GM12878 (cell line): ENCODE measurements at regions of chr3 and their contacts with region 1.

Region 1: GRCh38 chr3:9932843-9933560 is 632 bp upstream of the CRELD1 start:
- DNase-seq: peak; percentile 40
- ATAC-seq: peak; percentile 88
- H3K4me3 ChIP-seq: peak overlapping the region; percentile 89
- H3K27ac ChIP-seq: peak overlapping the region; percentile 71
- H3K4me1 ChIP-seq: peaks cover 9% of the 10 kb centered on the region
- H3K27me3 ChIP-seq: no peaks in the 10 kb centered on the region
- CTCF ChIP-seq: peak; percentile 82 to 93 (median 90)
- EP300 ChIP-seq: no peak
- POLR2A ChIP-seq: peak; percentile 66
- RAD21 ChIP-seq: peak; percentile 61

Region 2: DNA sequence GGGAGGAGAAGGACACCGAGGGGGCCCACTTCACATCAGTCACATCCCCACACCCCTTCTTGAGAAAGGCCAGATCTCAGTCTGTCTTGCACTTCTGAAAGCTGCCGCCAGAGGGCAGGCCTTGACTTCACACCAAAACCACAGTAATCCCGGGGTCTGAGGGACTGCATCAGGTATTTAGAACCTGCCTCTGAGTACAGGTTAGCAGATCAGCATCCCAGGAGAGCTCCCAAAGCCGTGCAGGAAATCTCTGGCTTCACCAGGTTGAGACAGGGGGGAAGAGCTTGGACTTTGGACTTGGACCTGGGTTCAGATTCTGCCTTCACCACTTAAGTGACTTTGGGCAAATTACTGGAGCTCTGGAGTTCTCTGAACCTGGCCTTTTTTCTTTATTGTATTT is 429.7 kb before region 1 on chr3:
- CTCF ChIA-PET with region 1: interaction called, 12 read pairs
- POLR2A ChIA-PET with region 1: no interaction called
- RAD21 ChIA-PET with region 1: interaction called, 7 read pairs
- SMC1A ChIA-PET with region 1: interaction called, 4 read pairs
- in situ Hi-C with region 1: no loop called
- intact Hi-C with region 1: no loop called
- DNase-seq: peak; percentile 21
- ATAC-seq: peak; percentile 76
- H3K4me3 ChIP-seq: no peak overlapping the region
- H3K27ac ChIP-seq: no peak overlapping the region
- H3K4me1 ChIP-seq: peaks cover 2% of the 10 kb centered on the region; the same call in 1 of the 2 replicates
- H3K27me3 ChIP-seq: peaks cover 1 to 8% of the 10 kb centered on the region in 2 experiments
- CTCF ChIP-seq: peak; percentile 87 to 96 (median 95)
- EP300 ChIP-seq: no peak
- POLR2A ChIP-seq: no peak
- RAD21 ChIP-seq: peak; percentile 91

Region 3: GRCh38 chr3:9613056-9613748 is 319.8 kb before region 1 on chr3:
- CTCF ChIA-PET with region 1: no interaction called
- POLR2A ChIA-PET with region 1: no interaction called
- RAD21 ChIA-PET with region 1: no interaction called
- SMC1A ChIA-PET with region 1: no interaction called
- in situ Hi-C with region 1: no loop called
- intact Hi-C with region 1: no loop called
- DNase-seq: no peak
- ATAC-seq: no peak
- H3K4me3 ChIP-seq: no peak overlapping the region
- H3K27ac ChIP-seq: no peak overlapping the region
- H3K4me1 ChIP-seq: no peaks in the 10 kb centered on the region
- H3K27me3 ChIP-seq: no peaks in the 10 kb centered on the region
- CTCF ChIP-seq: no peak
- EP300 ChIP-seq: no peak
- POLR2A ChIP-seq: no peak
- RAD21 ChIP-seq: no peak

Region 4: GRCh38 chr3:9638155-9638554 is 294.8 kb before region 1 on chr3:
- CTCF ChIA-PET with region 1: no interaction called
- POLR2A ChIA-PET with region 1: no interaction called
- RAD21 ChIA-PET with region 1: no interaction called
- SMC1A ChIA-PET with region 1: no interaction called
- in situ Hi-C with region 1: no loop called
- intact Hi-C with region 1: no loop called
- DNase-seq: no peak
- ATAC-seq: no peak
- H3K4me3 ChIP-seq: no peak overlapping the region
- H3K27ac ChIP-seq: no peak overlapping the region
- H3K4me1 ChIP-seq: no peaks in the 10 kb centered on the region
- H3K27me3 ChIP-seq: no peaks in the 10 kb centered on the region
- CTCF ChIP-seq: no peak
- EP300 ChIP-seq: no peak
- POLR2A ChIP-seq: no peak
- RAD21 ChIP-seq: no peak

Region 5: GRCh38 chr3:9843715-9844438 is 89.1 kb before region 1 on chr3 and contains the start of gene RPUSD3:
- CTCF ChIA-PET with region 1: interaction called, 24 read pairs
- POLR2A ChIA-PET with region 1: interaction called, 4 read pairs
- RAD21 ChIA-PET with region 1: interaction called, 7 read pairs
- SMC1A ChIA-PET with region 1: interaction called, 9 read pairs
- in situ Hi-C with region 1: no loop called
- intact Hi-C with region 1: loop called (anchors 5 kb)
- DNase-seq: peak; percentile 79
- ATAC-seq: peak; percentile 99
- H3K4me3 ChIP-seq: peak within 1 kb of the TSS; percentile 95
- H3K27ac ChIP-seq: peak within 1 kb of the TSS; percentile 57
- H3K4me1 ChIP-seq: peaks cover 11% of the 10 kb centered on the region
- H3K27me3 ChIP-seq: no peaks in the 10 kb centered on the region
- CTCF ChIP-seq: no peak
- EP300 ChIP-seq: no peak
- POLR2A ChIP-seq: peak; percentile 85
- RAD21 ChIP-seq: no peak
- polyA plus RNA-seq, gene RPUSD3: 6.4 to 13.6 TPM

Region 6: GRCh38 chr3:9915254-9916141 is 17.5 kb before region 1 on chr3:
- CTCF ChIA-PET with region 1: interaction called, 31 read pairs
- POLR2A ChIA-PET with region 1: interaction called, 3 read pairs
- RAD21 ChIA-PET with region 1: interaction called, 5 read pairs
- SMC1A ChIA-PET with region 1: interaction called, 6 read pairs
- in situ Hi-C with region 1: no loop called
- intact Hi-C with region 1: no loop called
- DNase-seq: no peak
- ATAC-seq: peak; percentile 79
- H3K4me3 ChIP-seq: peak overlapping the region; percentile 54
- H3K27ac ChIP-seq: no peak overlapping the region
- H3K4me1 ChIP-seq: peaks cover 10% of the 10 kb centered on the region
- H3K27me3 ChIP-seq: peaks cover 0 to 2% of the 10 kb centered on the region in 2 experiments; a peak in 1 of 4 replicates
- CTCF ChIP-seq: peak in 1 of 3 experiments; percentile 45; a peak in 3 of 6 replicates
- EP300 ChIP-seq: no peak
- POLR2A ChIP-seq: no peak
- RAD21 ChIP-seq: no peak

Region 7: DNA sequence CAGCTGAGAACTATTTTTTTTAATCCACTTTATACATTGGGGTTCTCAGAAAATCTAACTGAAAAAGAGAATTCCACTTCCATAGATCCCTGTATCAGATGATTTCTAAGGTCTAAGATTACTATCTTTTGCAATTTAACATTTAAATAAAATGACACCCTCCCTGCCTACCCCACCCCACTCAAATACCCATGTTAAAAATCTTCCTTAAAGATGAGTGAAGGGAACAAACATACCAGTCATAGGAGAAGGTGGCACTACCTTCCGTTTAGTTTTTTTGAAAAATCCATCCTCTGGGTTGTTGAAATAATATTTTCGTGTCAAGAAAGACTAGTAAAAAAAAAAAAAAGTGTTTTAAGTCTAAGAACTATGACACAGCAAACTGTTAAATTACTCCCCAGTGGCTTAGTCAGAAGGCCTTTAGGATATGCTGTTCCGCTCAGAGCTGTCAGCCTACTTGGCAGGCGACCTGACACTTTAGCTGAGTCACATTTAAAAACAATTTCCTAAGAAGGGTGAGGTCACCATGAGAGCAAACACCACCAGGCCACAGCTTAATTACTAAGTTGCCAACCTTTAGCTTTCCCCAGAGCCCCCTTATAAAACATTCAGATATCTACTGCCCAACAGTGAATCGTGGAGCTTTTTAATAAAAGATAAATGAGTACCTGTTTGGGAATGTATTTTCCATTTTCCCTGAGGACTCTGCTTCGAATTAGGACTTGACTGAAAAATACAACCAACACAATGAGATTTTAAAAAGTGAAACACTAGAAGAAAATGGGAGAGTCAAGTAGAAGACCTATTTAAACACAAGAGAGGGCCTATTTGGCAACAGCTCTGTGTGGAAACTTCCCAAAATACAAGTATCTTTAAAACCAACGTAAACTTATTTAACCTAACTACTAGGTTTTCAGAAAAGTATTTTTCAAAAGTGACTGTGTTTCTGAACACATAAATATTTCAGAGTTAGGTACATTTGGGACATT is 44.0 kb after region 1 on chr3:
- CTCF ChIA-PET with region 1: interaction called, 10 read pairs
- POLR2A ChIA-PET with region 1: interaction called, 4 read pairs
- RAD21 ChIA-PET with region 1: interaction called, 5 read pairs
- SMC1A ChIA-PET with region 1: interaction called, 6 read pairs
- in situ Hi-C with region 1: no loop called
- intact Hi-C with region 1: no loop called
- DNase-seq: no peak
- ATAC-seq: peak; percentile 60
- H3K4me3 ChIP-seq: no peak overlapping the region
- H3K27ac ChIP-seq: no peak overlapping the region; the same call in 1 of the 2 replicates
- H3K4me1 ChIP-seq: no peaks in the 10 kb centered on the region
- H3K27me3 ChIP-seq: no peaks in the 10 kb centered on the region
- CTCF ChIP-seq: no peak
- EP300 ChIP-seq: no peak
- POLR2A ChIP-seq: no peak
- RAD21 ChIP-seq: no peak

Region 8: GRCh38 chr3:10026084-10026890 is 93.3 kb after region 1 on chr3 and contains the start of gene FANCD2:
- CTCF ChIA-PET with region 1: interaction called, 12 read pairs
- POLR2A ChIA-PET with region 1: interaction called, 4 read pairs
- RAD21 ChIA-PET with region 1: interaction called, 9 read pairs
- SMC1A ChIA-PET with region 1: interaction called, 7 read pairs
- in situ Hi-C with region 1: no loop called
- intact Hi-C with region 1: no loop called
- DNase-seq: peak; percentile 60
- ATAC-seq: peak; percentile 94
- H3K4me3 ChIP-seq: peak within 1 kb of the TSS; percentile 89
- H3K27ac ChIP-seq: peak within 1 kb of the TSS; percentile 96
- H3K4me1 ChIP-seq: no peaks in the 10 kb centered on the region
- H3K27me3 ChIP-seq: no peaks in the 10 kb centered on the region
- CTCF ChIP-seq: no peak
- EP300 ChIP-seq: peak in 1 of 2 experiments; percentile 28; a peak in 1 of 4 replicates
- POLR2A ChIP-seq: peak; percentile 92
- RAD21 ChIP-seq: no peak
- polyA plus RNA-seq, gene FANCD2: 37.9 to 61.5 TPM

Region 9: GRCh38 chr3:10322352-10322710 is 389.3 kb after region 1 on chr3:
- CTCF ChIA-PET with region 1: interaction called, 45 read pairs
- POLR2A ChIA-PET with region 1: interaction called, 3 read pairs
- RAD21 ChIA-PET with region 1: interaction called, 51 read pairs
- SMC1A ChIA-PET with region 1: interaction called, 20 read pairs
- in situ Hi-C with region 1: no loop called
- intact Hi-C with region 1: loop called (anchors 10 kb)
- DNase-seq: no peak
- ATAC-seq: peak; percentile 69
- H3K4me3 ChIP-seq: no peak overlapping the region
- H3K27ac ChIP-seq: no peak overlapping the region
- H3K4me1 ChIP-seq: 0 out of 2 replicates have a peak, but pooled peaks cover 3% of the 10 kb centered on the region
- H3K27me3 ChIP-seq: peaks cover 0 to 3% of the 10 kb centered on the region in 2 experiments; a peak in 1 of 4 replicates
- CTCF ChIP-seq: peak; percentile 57 to 68 (median 62)
- EP300 ChIP-seq: no peak
- POLR2A ChIP-seq: no peak
- RAD21 ChIP-seq: peak; percentile 70